GM12878 (cell line): ENCODE measurements at regions of chr19 and their contacts with region 1.

Region 1: DNA sequence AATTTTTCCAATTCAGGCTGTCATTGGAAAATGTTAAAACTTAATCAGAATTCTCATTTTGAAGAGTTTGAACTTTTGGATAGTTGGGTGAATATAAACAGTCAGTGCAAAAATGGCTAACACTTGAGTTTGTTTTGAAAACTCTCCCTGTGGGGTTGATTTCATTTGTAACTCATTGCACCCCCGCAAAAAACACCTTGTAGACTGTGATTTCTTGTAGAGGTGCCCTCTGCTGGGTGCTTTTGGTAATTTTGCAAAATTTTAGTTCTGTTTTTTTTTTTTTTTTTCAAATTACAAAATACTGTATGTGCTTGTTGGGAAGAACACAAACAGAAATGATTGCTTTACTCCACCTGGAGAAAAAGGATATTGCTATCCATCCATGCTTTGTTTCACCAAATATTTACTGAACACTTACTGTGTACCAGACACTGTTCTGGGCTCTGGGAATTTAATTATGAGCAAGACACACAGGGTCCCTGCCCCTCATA is 28.2 kb upstream of the GPI start:
- DNase-seq: no peak
- ATAC-seq: peak; percentile 74
- H3K4me3 ChIP-seq: no peak overlapping the region
- H3K27ac ChIP-seq: no peak overlapping the region
- H3K4me1 ChIP-seq: no peaks in the 10 kb centered on the region
- H3K27me3 ChIP-seq: no peaks in the 10 kb centered on the region
- CTCF ChIP-seq: peak; percentile 47 to 60 (median 57); a peak in 5 of 6 replicates
- EP300 ChIP-seq: no peak
- POLR2A ChIP-seq: no peak
- RAD21 ChIP-seq: peak; percentile 63

Region 2: DNA sequence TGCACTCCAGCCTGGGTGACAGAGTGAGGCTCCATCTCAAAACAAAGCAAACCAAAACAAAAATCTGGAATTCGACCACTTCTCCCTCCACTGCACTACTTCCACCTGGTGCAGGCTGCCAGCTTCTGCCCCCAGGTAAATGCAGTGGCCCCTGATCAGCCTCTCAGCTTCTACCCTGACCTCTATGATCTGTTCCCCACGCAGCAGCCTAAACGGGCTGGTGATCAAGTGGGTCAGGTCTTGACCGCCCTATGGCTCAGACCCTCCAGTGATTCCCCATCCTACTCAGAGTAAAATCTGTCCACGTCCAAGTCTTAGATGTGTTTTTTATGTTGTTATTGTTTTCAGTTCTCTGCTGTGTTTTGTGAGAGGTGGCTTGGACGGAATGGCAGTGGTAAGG is 376.3 kb before region 1 on chr19:
- CTCF ChIA-PET with region 1: no interaction called
- POLR2A ChIA-PET with region 1: no interaction called
- RAD21 ChIA-PET with region 1: no interaction called
- SMC1A ChIA-PET with region 1: no interaction called
- in situ Hi-C with region 1: no loop called
- intact Hi-C with region 1: no loop called
- DNase-seq: no peak
- ATAC-seq: no peak
- H3K4me3 ChIP-seq: no peak overlapping the region
- H3K27ac ChIP-seq: no peak overlapping the region
- H3K4me1 ChIP-seq: no peaks in the 10 kb centered on the region
- H3K27me3 ChIP-seq: no peaks in the 10 kb centered on the region; a peak in 1 of 4 replicates
- CTCF ChIP-seq: no peak
- EP300 ChIP-seq: no peak
- POLR2A ChIP-seq: no peak
- RAD21 ChIP-seq: no peak

Region 3: GRCh38 chr19:34241513-34242337 is 95.1 kb before region 1 on chr19:
- CTCF ChIA-PET with region 1: no interaction called
- POLR2A ChIA-PET with region 1: no interaction called
- RAD21 ChIA-PET with region 1: no interaction called
- SMC1A ChIA-PET with region 1: no interaction called
- in situ Hi-C with region 1: no loop called
- intact Hi-C with region 1: loop called (anchors 2 kb)
- DNase-seq: no peak
- ATAC-seq: peak; percentile 93
- H3K4me3 ChIP-seq: no peak overlapping the region
- H3K27ac ChIP-seq: no peak overlapping the region
- H3K4me1 ChIP-seq: peaks cover 7% of the 10 kb centered on the region; the same call in 1 of the 2 replicates
- H3K27me3 ChIP-seq: no peaks in the 10 kb centered on the region
- CTCF ChIP-seq: peak; percentile 32 to 62 (median 44)
- EP300 ChIP-seq: no peak
- POLR2A ChIP-seq: no peak
- RAD21 ChIP-seq: peak; percentile 40; the same call in 1 of the 2 replicates

Region 4: DNA sequence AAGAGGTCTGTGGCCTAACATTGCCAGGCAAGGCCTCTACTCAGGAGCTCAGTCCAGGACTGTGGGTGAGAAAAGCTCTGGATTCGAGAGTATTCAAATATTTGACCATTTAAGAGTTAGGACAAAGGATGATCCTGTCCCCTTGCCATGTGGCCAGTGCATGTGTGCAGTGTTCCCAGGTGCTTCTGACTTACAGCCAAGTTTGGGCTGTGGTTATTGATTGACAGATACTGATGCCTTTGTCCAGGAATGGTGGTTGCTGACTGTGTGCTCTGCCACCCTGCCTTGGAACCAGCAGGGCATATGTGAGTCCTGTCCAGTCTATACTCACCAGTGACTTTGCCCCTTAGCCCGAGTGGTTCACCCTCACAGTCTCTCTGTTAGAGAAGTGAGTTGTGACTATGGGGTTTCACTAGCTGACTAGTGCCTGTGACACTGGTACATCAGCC is 30.6 kb before region 1 on chr19:
- CTCF ChIA-PET with region 1: no interaction called
- POLR2A ChIA-PET with region 1: no interaction called
- RAD21 ChIA-PET with region 1: no interaction called
- SMC1A ChIA-PET with region 1: no interaction called
- in situ Hi-C with region 1: no loop called
- intact Hi-C with region 1: no loop called
- DNase-seq: no peak
- ATAC-seq: peak; percentile 44
- H3K4me3 ChIP-seq: no peak overlapping the region
- H3K27ac ChIP-seq: no peak overlapping the region
- H3K4me1 ChIP-seq: peaks cover 15% of the 10 kb centered on the region
- H3K27me3 ChIP-seq: no peaks in the 10 kb centered on the region
- CTCF ChIP-seq: no peak
- EP300 ChIP-seq: no peak
- POLR2A ChIP-seq: no peak
- RAD21 ChIP-seq: no peak

Region 5: GRCh38 chr19:34325981-34326787 is 10.6 kb before region 1 on chr19:
- CTCF ChIA-PET with region 1: interaction called, 12 read pairs
- POLR2A ChIA-PET with region 1: interaction called, 4 read pairs
- RAD21 ChIA-PET with region 1: no interaction called
- SMC1A ChIA-PET with region 1: interaction called, 8 read pairs
- in situ Hi-C with region 1: no loop called
- intact Hi-C with region 1: no loop called
- DNase-seq: no peak
- ATAC-seq: no peak
- H3K4me3 ChIP-seq: no peak overlapping the region
- H3K27ac ChIP-seq: no peak overlapping the region
- H3K4me1 ChIP-seq: no peaks in the 10 kb centered on the region
- H3K27me3 ChIP-seq: no peaks in the 10 kb centered on the region
- CTCF ChIP-seq: no peak
- EP300 ChIP-seq: no peak
- POLR2A ChIP-seq: no peak
- RAD21 ChIP-seq: no peak